Activated CD4-positive, alpha-beta T cell treated with anti-CD3 and anti-CD28 coated beads for 36 hours (primary cell): ENCODE measurements at regions of chr1 and their contacts with region 1.

Region 1: GRCh38 chr1:44721485-44722361 is 9.2 kb downstream of the RNU5D-1 start:
- DNase-seq: peak; percentile 89
- ATAC-seq: peak; percentile 85
- H3K4me3 Mint-ChIP-seq: peak overlapping the region; percentile 66
- H3K27ac Mint-ChIP-seq: peak overlapping the region; percentile 96
- H3K4me1 Mint-ChIP-seq: peaks cover 80% of the 10 kb centered on the region
- H3K27me3 Mint-ChIP-seq: no peaks in the 10 kb centered on the region

Region 2: DNA sequence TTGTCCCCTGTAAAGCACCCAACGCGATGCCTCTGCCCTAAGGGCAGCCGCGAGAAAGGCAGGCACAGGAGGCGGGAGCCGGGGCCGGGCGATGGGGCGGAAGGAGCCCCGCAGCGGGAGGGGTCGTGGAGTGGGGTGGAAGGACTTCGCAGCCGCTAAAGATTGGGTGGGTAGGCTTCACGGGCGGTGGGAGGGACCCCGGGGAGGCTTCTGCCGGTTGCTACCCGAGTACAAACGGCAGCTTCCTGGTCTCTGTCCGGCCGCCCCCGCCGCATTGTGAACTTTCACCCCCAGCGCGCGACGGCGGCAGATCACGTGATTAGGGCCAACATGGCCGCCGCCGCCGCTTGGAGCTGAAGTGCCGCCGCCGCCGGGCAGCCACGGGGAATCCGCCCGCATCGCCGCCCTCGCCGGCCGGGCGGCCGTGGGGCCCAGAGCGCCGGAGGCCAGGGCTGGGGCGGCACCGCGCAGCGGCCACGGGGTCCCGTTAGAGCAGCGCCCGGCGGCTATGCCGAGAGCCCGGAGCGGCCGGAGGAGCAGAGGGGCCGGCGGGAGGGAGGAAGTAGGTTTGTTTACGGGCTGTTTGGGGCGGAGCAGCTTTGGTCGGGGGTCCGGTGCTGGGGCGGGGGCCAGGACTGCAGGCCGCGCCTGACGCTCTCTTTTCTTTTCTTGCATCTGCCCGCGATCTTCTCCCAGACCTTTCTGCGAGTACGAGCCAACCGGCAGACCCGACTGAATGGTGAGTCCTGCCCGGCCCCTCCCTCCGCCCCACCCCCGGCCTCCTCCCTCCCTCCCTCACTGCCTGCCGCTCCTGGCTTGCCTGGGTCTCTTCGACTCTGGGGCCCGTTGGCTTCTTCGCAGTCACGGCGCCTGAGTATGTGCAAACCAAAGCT is 89.8 kb before region 1 on chr1:
- CTCF ChIA-PET with region 1: no interaction called
- POLR2A ChIA-PET with region 1: interaction called, 17 read pairs
- intact Hi-C with region 1: no loop called
- DNase-seq: peak; percentile 95
- ATAC-seq: peak; percentile 81
- H3K4me3 Mint-ChIP-seq: peak overlapping the region; percentile 86
- H3K27ac Mint-ChIP-seq: peak overlapping the region; percentile 97
- H3K4me1 Mint-ChIP-seq: peaks cover 40% of the 10 kb centered on the region
- H3K27me3 Mint-ChIP-seq: no peaks in the 10 kb centered on the region

Region 3: GRCh38 chr1:44707112-44707881 is 14.4 kb before region 1 on chr1:
- CTCF ChIA-PET with region 1: interaction called, 17 read pairs
- POLR2A ChIA-PET with region 1: interaction called, 16 read pairs
- intact Hi-C with region 1: no loop called
- DNase-seq: no peak
- ATAC-seq: peak; percentile 45
- H3K4me3 Mint-ChIP-seq: no peak overlapping the region
- H3K27ac Mint-ChIP-seq: no peak overlapping the region
- H3K4me1 Mint-ChIP-seq: peaks cover 14% of the 10 kb centered on the region
- H3K27me3 Mint-ChIP-seq: no peaks in the 10 kb centered on the region

Region 4: DNA sequence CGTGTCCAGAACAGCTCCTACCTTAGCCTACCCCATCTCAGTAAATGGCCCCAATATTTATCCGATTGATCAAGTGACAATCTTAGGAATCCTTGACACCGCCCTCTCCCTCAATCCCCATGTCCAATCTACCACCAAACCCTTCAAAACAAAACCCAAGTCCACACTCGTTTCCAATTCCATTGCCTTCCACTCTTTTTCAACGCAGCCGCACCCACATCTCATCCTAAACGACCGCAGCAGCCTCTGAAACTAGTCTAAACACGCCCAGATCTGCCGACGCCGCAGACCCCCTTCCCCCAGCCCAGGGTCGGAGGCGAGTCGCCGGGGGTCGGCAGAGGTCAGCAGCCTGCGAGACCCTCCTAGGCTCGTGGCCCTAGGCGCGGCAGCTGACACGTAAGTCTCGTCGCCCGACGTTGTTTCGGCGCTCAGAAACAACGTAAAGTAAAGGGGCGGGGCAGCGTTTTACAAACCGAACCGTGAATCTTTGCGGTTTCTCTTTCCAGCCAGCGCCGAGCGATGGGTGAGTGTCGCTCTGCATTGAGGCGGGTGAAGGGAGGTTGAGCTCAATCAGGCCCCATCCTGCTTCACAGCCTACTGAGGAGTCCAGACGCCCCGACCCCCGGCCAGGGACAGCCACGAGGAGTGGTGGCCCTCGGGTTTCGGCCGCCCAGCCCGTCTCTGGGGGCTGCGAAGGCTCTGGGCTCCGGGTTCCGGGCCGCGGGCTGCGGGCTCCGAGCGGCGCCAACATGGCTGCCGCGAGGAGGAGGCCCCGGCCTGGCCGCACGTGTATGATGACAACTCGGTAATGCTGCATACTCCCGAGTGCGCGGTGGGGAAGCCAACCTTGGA is 53.6 kb after region 1 on chr1 and contains the start of gene RPS8:
- CTCF ChIA-PET with region 1: no interaction called
- POLR2A ChIA-PET with region 1: interaction called, 41 read pairs
- intact Hi-C with region 1: no loop called
- DNase-seq: peak; percentile 94
- ATAC-seq: peak; percentile 84
- H3K4me3 Mint-ChIP-seq: peak within 1 kb of the TSS; percentile 96
- H3K27ac Mint-ChIP-seq: peak within 1 kb of the TSS; percentile 100
- H3K4me1 Mint-ChIP-seq: peaks cover 33% of the 10 kb centered on the region
- H3K27me3 Mint-ChIP-seq: no peaks in the 10 kb centered on the region
- total RNA-seq, gene RPS8: 3,005 to 3,275 TPM

Region 5: GRCh38 chr1:44799770-44800584 is 78.3 kb after region 1 on chr1 and contains the start of gene PLK3:
- CTCF ChIA-PET with region 1: no interaction called
- POLR2A ChIA-PET with region 1: interaction called, 60 read pairs
- intact Hi-C with region 1: no loop called
- DNase-seq: peak; percentile 99
- ATAC-seq: peak; percentile 84
- H3K4me3 Mint-ChIP-seq: peak within 1 kb of the TSS; percentile 87
- H3K27ac Mint-ChIP-seq: peak within 1 kb of the TSS; percentile 100
- H3K4me1 Mint-ChIP-seq: peaks cover 41% of the 10 kb centered on the region
- H3K27me3 Mint-ChIP-seq: no peaks in the 10 kb centered on the region
- total RNA-seq, gene PLK3: 52.1 to 52.7 TPM

Region 6: DNA sequence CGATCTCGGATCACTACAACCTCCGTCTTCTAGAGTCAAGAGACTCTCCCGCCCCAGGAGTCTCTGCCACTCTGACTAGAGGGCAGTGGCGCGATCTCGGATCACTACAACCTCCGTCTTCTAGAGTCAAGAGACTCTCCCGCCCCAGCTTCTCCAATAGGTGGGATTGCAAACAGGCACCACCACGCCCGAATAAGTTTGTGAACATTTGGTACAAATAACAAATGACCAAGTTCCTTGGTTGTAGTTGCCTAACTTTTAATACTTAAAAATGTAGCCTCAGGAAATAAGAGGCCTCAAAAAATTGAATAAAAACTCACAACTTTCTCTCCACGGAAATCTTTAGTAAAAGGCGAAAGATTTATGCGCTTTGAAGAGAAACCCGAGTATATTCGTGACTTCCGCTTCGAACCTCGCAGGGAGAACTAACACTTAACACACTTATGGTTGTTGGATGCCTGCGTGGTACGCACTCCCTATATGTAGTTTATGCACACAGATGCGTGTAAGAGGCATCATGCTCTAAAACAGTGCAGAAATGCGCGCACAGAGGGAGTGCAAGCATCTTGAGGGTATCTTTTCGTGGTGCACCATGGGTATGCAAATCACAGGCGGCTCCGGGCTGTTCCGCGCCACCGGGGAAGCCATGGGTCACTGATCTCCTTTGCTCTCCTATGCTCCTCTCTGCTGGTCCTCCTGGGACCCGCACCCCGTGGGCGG is 98.0 kb after region 1 on chr1:
- CTCF ChIA-PET with region 1: interaction called, 8 read pairs
- POLR2A ChIA-PET with region 1: interaction called, 675 read pairs
- intact Hi-C with region 1: loop called (anchors 1 kb)
- DNase-seq: peak; percentile 88
- ATAC-seq: peak; percentile 88
- H3K4me3 Mint-ChIP-seq: peak overlapping the region; percentile 85
- H3K27ac Mint-ChIP-seq: peak overlapping the region; percentile 100
- H3K4me1 Mint-ChIP-seq: peaks cover 37% of the 10 kb centered on the region
- H3K27me3 Mint-ChIP-seq: no peaks in the 10 kb centered on the region

Region 7: GRCh38 chr1:45499415-45499769 is 777.7 kb after region 1 on chr1:
- CTCF ChIA-PET with region 1: no interaction called
- POLR2A ChIA-PET with region 1: interaction called, 11 read pairs
- intact Hi-C with region 1: no loop called
- DNase-seq: peak; percentile 45
- ATAC-seq: no peak
- H3K4me3 Mint-ChIP-seq: peak overlapping the region; percentile 81
- H3K27ac Mint-ChIP-seq: peak overlapping the region; percentile 92
- H3K4me1 Mint-ChIP-seq: peaks cover 23% of the 10 kb centered on the region
- H3K27me3 Mint-ChIP-seq: no peaks in the 10 kb centered on the region